GM12878 (cell line): ENCODE measurements at regions of chr2 and their contacts with region 1.

Region 1: GRCh38 chr2:81412681-81413080 is 1108.1 kb upstream of the LRRTM1 start:
- DNase-seq: no peak
- ATAC-seq: no peak
- H3K4me3 ChIP-seq: no peak overlapping the region
- H3K27ac ChIP-seq: no peak overlapping the region
- H3K4me1 ChIP-seq: no peaks in the 10 kb centered on the region
- H3K27me3 ChIP-seq: no peaks in the 10 kb centered on the region
- CTCF ChIP-seq: no peak
- EP300 ChIP-seq: no peak
- POLR2A ChIP-seq: no peak
- RAD21 ChIP-seq: no peak

Region 2: GRCh38 chr2:81389203-81389602 is 23.5 kb before region 1 on chr2:
- CTCF ChIA-PET with region 1: interaction called, 3 read pairs
- POLR2A ChIA-PET with region 1: no interaction called
- RAD21 ChIA-PET with region 1: no interaction called
- SMC1A ChIA-PET with region 1: no interaction called
- in situ Hi-C with region 1: no loop called
- intact Hi-C with region 1: loop called (anchors 2 kb)
- DNase-seq: no peak
- ATAC-seq: no peak
- H3K4me3 ChIP-seq: no peak overlapping the region
- H3K27ac ChIP-seq: no peak overlapping the region
- H3K4me1 ChIP-seq: no peaks in the 10 kb centered on the region
- H3K27me3 ChIP-seq: no peaks in the 10 kb centered on the region
- CTCF ChIP-seq: peak; percentile 14 to 33 (median 21); a peak in 3 of 6 replicates
- EP300 ChIP-seq: no peak
- POLR2A ChIP-seq: no peak
- RAD21 ChIP-seq: no peak